MCF 10A (cell line): ENCODE measurements at regions of chr7 and their contacts with region 1.

Region 1: GRCh38 chr7:154804449-154804848 is 198.5 kb downstream of the PAXIP1 start:
- DNase-seq: peak; percentile 33
- H3K4me3 Mint-ChIP-seq: no peak overlapping the region
- H3K27ac Mint-ChIP-seq: no peak overlapping the region
- H3K4me1 Mint-ChIP-seq: no peaks in the 10 kb centered on the region
- H3K27me3 Mint-ChIP-seq: no peaks in the 10 kb centered on the region
- CTCF ChIP-seq: no peak

Region 2: GRCh38 chr7:154777023-154777422 is 27.4 kb before region 1 on chr7:
- CTCF ChIA-PET with region 1: interaction called, 9 read pairs
- POLR2A ChIA-PET with region 1: interaction called, 12 read pairs
- intact Hi-C with region 1: no loop called
- DNase-seq: peak; percentile 9
- H3K4me3 Mint-ChIP-seq: no peak overlapping the region
- H3K27ac Mint-ChIP-seq: no peak overlapping the region
- H3K4me1 Mint-ChIP-seq: peaks cover 11% of the 10 kb centered on the region
- H3K27me3 Mint-ChIP-seq: no peaks in the 10 kb centered on the region
- CTCF ChIP-seq: no peak

Region 3: GRCh38 chr7:154817224-154817896 is 12.9 kb after region 1 on chr7:
- CTCF ChIA-PET with region 1: interaction called, 5 read pairs
- POLR2A ChIA-PET with region 1: interaction called, 11 read pairs
- intact Hi-C with region 1: no loop called
- DNase-seq: no peak
- H3K4me3 Mint-ChIP-seq: no peak overlapping the region
- H3K27ac Mint-ChIP-seq: no peak overlapping the region
- H3K4me1 Mint-ChIP-seq: no peaks in the 10 kb centered on the region
- H3K27me3 Mint-ChIP-seq: no peaks in the 10 kb centered on the region
- CTCF ChIP-seq: no peak

Region 4: DNA sequence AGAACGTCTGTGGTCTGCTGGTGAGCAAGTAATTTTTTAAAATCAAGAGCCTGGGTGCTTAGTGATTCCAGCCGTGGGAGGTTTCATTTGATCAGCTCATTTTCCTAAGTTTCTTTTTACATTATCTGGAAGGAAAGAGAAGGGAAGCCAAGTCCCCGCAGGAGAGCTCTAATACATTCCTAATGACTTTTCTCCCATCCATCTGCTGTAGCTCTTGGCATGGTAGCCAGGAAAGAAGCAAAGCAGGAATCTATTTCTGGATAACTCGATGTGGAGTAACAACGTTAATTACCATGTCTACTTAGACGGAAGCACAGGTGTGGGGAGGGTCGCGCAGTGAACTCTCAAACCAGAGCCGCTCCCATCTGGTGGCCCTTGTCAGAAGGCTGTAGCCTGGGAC is 76.6 kb after region 1 on chr7:
- CTCF ChIA-PET with region 1: no interaction called
- POLR2A ChIA-PET with region 1: no interaction called
- intact Hi-C with region 1: no loop called
- DNase-seq: no peak
- H3K4me3 Mint-ChIP-seq: no peak overlapping the region
- H3K27ac Mint-ChIP-seq: no peak overlapping the region
- H3K4me1 Mint-ChIP-seq: no peaks in the 10 kb centered on the region
- H3K27me3 Mint-ChIP-seq: no peaks in the 10 kb centered on the region
- CTCF ChIP-seq: no peak

Region 5: DNA sequence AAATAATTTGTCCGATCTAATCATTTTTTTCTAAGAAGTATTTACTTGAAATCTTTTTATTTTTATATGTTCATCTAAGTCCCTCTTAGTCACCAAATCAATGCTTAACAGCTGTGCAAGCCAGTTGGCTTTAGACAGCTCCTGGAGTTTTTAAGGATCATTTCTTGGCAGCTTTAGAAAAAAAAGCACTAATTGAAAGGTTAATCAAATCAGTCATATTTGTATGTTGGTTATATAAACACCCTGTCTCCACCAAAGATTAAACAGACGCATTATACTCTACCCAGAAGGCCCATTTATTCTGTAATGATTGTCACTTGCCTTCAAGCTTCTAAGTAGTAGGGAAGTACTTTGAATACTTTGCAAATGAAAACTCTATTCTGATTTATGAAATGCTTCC is 138.2 kb after region 1 on chr7:
- CTCF ChIA-PET with region 1: no interaction called
- POLR2A ChIA-PET with region 1: no interaction called
- intact Hi-C with region 1: no loop called
- DNase-seq: no peak
- H3K4me3 Mint-ChIP-seq: no peak overlapping the region
- H3K27ac Mint-ChIP-seq: no peak overlapping the region
- H3K4me1 Mint-ChIP-seq: no peaks in the 10 kb centered on the region
- H3K27me3 Mint-ChIP-seq: no peaks in the 10 kb centered on the region
- CTCF ChIP-seq: no peak

Region 6: GRCh38 chr7:156105337-156106106 is 1301.1 kb after region 1 on chr7:
- CTCF ChIA-PET with region 1: no interaction called
- POLR2A ChIA-PET with region 1: no interaction called
- intact Hi-C with region 1: no loop called
- DNase-seq: no peak
- H3K4me3 Mint-ChIP-seq: no peak overlapping the region
- H3K27ac Mint-ChIP-seq: no peak overlapping the region
- H3K4me1 Mint-ChIP-seq: no peaks in the 10 kb centered on the region
- H3K27me3 Mint-ChIP-seq: peaks cover 28% of the 10 kb centered on the region
- CTCF ChIP-seq: no peak